ENCODE measurements at regions of chr12 and their contacts with region 1.

Region 1: DNA sequence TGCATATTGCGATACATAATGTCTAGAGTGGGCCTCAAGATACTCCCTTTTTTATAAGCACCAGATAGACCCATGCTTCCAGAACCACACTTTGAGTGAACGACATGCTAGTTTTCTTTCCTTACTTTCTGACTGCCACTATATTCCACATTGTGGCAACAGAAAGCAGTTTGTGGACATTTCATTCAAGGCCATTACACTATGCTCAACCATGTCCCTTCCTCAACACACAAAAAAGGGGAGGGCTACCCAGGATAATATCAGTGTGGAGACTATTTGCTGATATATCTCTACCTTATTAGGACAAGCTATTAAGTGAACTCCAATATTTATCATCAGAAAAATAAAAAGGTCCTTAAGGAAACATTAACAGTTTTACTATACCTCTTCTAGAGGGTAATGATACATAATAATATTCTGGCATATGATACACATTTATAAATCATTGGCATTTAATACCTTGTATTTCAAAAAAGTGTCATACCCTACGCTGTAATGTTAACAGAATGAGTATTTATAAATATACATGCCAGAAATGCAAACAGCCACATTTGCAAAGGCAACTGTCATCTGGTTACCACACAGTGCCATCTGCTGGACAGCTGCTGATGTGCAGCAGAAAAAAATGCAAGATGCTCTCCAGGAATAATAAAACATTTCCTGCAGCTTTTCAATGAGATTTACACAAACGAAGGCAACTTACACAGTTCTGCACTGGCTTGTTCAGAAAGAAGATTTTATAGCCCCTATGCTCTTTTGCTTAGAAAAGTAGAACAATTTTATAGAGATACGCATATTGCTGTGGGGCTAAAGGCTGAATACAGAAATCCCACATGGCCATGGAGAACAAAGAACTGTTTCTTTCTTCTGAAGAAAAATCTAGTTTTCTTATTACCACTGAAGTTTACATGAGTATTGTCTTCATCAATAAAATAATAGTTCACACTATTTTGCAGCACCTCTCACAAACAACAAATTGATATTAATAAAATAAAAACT is 182.2 kb upstream of the GRIP1 start:
- DNase-seq: peak; percentile 44
- ATAC-seq: peak; percentile 41 to 49

Region 2: DNA sequence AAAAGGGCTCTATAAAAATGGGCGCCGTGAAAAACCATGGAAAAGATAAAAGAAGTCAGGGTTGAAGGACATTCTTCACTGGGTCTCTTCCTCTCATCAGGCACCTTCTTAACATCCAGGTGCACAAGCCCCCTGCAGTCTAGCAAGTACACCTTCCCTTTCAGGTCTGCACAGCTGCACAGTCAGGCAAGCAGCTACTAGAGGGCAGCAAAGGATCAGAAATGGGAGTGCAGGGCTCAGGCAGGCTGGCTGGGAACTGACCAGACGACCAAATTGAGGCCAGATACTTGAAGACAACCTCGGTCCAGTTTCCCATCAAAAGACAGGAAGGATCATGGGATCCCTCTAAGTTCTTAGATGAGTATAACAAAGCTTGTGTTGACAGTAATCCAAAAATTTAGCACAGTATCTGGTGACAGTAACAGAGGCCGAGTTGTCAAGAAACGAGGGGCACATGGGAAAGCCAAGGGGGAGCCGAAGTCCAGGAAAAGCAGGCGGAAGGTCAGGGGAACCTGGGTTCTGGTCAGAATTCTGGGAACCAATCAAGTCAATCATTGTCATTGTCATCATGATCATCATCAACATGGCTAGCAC is 172.1 kb before region 1 on chr12:
- intact Hi-C with region 1: loop called (anchors 2 to 10 kb)
- DNase-seq: peak; percentile 20
- ATAC-seq: peak; percentile 78 to 86

Region 3: DNA sequence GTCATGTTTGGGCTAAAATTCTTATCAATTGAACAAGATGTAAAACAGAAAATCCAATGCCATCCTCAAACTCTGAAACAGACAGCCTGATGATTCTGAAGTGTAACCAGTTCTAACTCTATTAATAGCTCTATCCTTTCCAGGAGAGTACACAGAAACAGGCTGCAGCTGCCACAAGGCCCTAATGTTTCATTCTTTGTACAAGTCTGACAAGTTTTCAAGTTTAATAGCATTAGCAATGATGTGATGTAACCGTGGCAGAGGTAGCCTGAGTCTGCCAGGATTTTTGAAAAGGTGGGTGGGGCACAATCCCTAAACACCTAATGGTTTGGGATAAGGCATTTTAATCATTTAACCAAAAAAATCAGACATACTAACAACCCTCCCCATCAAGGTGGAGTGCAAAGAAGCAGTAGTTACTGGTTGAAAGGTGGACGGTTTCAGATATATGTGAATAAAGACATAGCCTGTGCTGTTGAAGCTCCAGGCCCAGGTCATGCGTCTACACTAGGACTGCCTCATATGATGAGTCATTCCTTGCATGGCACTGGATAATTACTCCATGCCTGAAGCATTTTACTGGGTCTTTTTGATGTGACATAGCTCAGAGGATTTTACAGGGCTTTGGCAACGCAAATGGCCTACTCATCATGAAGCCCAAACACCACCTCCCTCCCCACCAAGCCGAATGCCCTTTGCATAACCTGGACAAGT is 37.0 kb before region 1 on chr12:
- intact Hi-C with region 1: no loop called
- DNase-seq: no peak
- ATAC-seq: peak in 1 of 2 donors; percentile 86

Region 4: DNA sequence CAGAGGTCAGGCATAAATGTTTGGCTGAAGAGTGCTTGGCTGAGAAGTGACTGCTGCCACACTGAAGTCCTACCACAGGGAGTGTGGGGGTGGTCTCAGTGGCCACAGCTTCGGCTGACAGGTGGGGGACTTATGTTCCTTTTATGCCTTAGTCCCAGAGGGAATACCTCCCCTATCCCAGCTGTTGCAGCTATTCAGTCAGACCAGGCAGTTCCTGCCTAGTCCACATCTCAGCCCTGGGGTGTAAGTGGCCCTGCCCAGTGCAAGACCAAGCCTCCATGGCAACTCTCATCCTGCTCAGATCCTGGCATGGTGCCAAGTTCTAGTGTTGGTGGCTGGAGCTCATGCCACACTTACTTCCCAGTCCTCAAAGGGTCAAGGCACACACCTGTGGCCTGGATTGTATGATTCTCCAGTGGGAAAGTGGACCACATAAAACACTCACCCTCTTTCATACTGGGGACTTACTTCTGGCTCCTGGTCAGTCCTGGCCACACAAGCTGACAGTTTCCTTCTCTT is 246.8 kb after region 1 on chr12:
- intact Hi-C with region 1: no loop called
- DNase-seq: no peak
- ATAC-seq: no peak